ENCODE measurements at regions of chr11 and their contacts with region 1.

Region 1: DNA sequence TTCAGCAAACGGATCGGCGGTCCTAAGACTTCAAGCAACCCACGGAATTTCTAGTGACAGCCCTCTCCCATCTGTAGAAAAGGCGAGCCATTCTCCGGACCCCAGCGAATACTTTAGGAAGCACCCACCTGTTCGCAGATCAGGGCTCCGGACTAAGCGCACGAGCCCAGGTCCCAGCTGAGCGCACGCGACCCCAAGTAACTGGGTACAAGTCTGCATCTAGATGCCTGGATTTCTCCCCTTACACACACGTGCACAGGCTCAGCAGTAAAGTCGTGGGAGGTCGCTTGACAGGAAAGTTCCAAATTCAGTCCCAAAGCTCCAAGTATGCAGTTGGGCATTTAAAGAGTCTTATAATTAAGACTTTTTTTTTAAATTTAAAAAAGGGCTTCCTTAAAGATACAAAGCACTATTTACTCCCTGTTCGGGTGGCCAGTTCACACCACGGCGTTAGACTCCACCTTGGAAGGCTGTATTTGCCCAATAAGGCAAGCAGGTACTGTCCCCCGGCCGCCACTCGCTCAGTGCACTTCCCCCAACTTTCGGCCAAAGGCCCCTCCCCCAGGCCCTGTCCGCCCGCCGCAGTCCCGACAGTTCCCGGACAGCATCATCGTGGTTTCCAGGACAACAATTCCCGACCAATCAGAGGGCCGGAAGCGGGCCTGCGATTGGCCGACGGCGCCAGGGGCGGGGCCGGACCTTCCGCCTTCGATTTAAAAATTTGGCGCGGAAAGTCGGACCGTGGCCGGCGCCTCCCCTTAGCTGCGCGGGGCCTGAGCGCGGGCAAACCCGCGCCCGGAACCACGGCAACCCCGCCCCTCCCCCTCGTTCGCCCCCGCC is at the start of gene E2F8:
- DNase-seq: peak; percentile 99
- H3K4me3 ChIP-seq: peak within 1 kb of the TSS; percentile 96
- H3K4me3 Mint-ChIP-seq: peak within 1 kb of the TSS; percentile 97
- H3K27ac Mint-ChIP-seq: peak within 1 kb of the TSS; percentile 90
- H3K4me1 ChIP-seq: peaks cover 48% of the 10 kb centered on the region
- H3K4me1 Mint-ChIP-seq: peaks cover 21% of the 10 kb centered on the region
- H3K27me3 ChIP-seq: no peaks in the 10 kb centered on the region
- H3K27me3 Mint-ChIP-seq: no peaks in the 10 kb centered on the region
- CTCF ChIP-seq: no peak
- total RNA-seq, gene E2F8: 38.1 and 38.4 TPM in 2 replicates

Region 2: DNA sequence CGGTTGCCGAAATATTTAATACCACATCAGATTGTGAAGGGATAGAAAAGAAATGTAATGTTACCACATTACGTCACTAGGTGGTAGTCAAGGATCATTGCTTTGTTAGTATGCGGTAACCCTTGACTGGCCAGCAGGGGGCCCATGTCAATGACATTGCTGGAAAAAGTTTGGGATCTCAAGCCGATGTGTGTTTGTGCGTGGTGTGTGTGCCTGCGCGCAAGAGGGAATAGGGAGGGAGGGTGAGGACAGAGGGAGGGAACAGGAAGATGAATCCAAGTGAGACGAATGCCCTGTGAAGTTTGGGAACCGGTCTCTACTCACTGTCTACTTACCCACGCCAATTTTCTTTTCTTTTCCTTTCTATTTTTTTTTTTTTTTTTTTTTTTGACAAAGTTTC is 169.4 kb before region 1 on chr11:
- CTCF ChIA-PET with region 1: interaction called, 3 read pairs
- POLR2A ChIA-PET with region 1: no interaction called
- intact Hi-C with region 1: loop called (anchors 5 kb)
- DNase-seq: peak; percentile 83 to 84
- H3K4me3 ChIP-seq: no peak overlapping the region
- H3K4me3 Mint-ChIP-seq: peak overlapping the region; percentile 29
- H3K27ac Mint-ChIP-seq: no peak overlapping the region
- H3K4me1 ChIP-seq: no peaks in the 10 kb centered on the region; the same call in 1 of the 2 replicates
- H3K4me1 Mint-ChIP-seq: peaks cover 15% of the 10 kb centered on the region
- H3K27me3 ChIP-seq: no peaks in the 10 kb centered on the region
- H3K27me3 Mint-ChIP-seq: peaks cover 8% of the 10 kb centered on the region
- CTCF ChIP-seq: peak; percentile 99

Region 3: GRCh38 chr11:19176629-19177186 is 63.9 kb before region 1 on chr11:
- CTCF ChIA-PET with region 1: no interaction called
- POLR2A ChIA-PET with region 1: no interaction called
- intact Hi-C with region 1: loop called (anchors 5 kb)
- DNase-seq: peak; percentile 44
- H3K4me3 ChIP-seq: no peak overlapping the region
- H3K4me3 Mint-ChIP-seq: no peak overlapping the region
- H3K27ac Mint-ChIP-seq: no peak overlapping the region
- H3K4me1 ChIP-seq: peaks cover 17% of the 10 kb centered on the region
- H3K4me1 Mint-ChIP-seq: peaks cover 20% of the 10 kb centered on the region
- H3K27me3 ChIP-seq: no peaks in the 10 kb centered on the region
- H3K27me3 Mint-ChIP-seq: no peaks in the 10 kb centered on the region
- CTCF ChIP-seq: no peak

Region 4: DNA sequence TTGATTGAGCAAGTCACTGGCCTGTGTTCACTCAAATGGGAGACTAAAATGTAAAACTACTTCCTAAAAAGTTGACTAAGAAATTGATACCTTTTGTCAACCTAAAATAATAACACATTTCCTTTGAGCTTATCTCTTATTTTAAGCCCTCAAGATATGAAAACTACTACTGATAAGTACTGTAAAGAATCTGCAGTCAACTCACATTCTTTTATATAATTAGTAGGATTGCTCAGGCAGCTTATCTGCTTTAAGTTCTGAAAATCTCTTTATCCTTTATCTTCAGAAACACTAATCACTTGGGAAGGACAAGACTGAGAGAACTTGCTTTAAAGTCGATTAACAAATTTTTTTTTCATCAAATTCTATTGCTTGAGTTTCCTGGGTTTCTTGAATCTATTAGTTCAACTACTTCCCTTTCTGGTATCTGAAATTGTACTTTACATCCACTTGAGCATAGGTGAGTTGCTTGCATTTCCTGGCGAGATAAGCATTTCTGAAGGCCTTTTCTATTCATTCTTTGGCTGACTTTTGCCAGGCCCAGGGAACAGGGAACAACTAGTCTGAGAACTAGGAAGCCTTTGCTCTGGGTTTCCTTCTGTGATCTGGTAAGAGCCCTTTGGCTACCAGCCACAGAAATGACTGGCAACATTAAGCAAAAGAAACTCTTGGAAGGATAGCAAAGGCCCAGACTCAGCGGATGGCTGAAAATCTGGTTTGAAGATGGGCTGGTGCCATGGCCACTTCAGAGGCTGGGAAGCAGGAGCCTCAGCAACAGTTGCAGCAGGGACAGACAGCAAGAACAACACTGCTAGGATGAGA is 19.5 kb before region 1 on chr11:
- CTCF ChIA-PET with region 1: interaction called, 7 read pairs
- POLR2A ChIA-PET with region 1: interaction called, 4 read pairs
- intact Hi-C with region 1: loop called (anchors 1 kb)
- DNase-seq: peak in 1 of 2 experiments; percentile 38
- H3K4me3 ChIP-seq: no peak overlapping the region
- H3K4me3 Mint-ChIP-seq: peak overlapping the region; percentile 1
- H3K27ac Mint-ChIP-seq: peak overlapping the region; percentile 52
- H3K4me1 ChIP-seq: peaks cover 43% of the 10 kb centered on the region
- H3K4me1 Mint-ChIP-seq: peaks cover 36% of the 10 kb centered on the region
- H3K27me3 ChIP-seq: no peaks in the 10 kb centered on the region
- H3K27me3 Mint-ChIP-seq: no peaks in the 10 kb centered on the region
- CTCF ChIP-seq: no peak

Region 5: GRCh38 chr11:19253153-19253745 is 12.6 kb after region 1 on chr11:
- CTCF ChIA-PET with region 1: no interaction called
- POLR2A ChIA-PET with region 1: no interaction called
- intact Hi-C with region 1: no loop called
- DNase-seq: peak; percentile 24 to 42
- H3K4me3 ChIP-seq: no peak overlapping the region
- H3K4me3 Mint-ChIP-seq: no peak overlapping the region
- H3K27ac Mint-ChIP-seq: no peak overlapping the region
- H3K4me1 ChIP-seq: no peaks in the 10 kb centered on the region; the same call in 1 of the 2 replicates
- H3K4me1 Mint-ChIP-seq: peaks cover 7% of the 10 kb centered on the region
- H3K27me3 ChIP-seq: no peaks in the 10 kb centered on the region
- H3K27me3 Mint-ChIP-seq: no peaks in the 10 kb centered on the region
- CTCF ChIP-seq: no peak

Region 6: DNA sequence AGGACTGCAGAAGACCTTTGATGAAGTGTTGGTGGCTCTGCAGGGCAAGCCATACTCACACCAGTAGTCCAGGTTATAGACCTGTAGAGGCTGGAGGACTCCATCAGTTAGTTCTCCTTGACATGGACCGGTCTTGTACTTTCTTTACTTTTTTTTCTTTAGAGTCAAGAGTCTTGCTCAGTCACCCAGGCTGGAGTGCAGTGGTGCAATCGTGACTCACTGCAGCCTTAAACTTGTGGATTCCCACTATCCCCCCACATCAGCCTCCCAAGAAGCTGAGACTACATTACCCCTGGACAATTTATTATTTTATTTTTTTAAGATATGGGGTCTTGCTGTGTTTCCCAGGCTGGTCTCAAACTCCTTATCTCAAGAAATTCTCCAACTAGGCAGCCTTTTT is 49.7 kb after region 1 on chr11:
- CTCF ChIA-PET with region 1: no interaction called
- POLR2A ChIA-PET with region 1: no interaction called
- intact Hi-C with region 1: no loop called
- DNase-seq: no peak
- H3K4me3 ChIP-seq: no peak overlapping the region
- H3K4me3 Mint-ChIP-seq: no peak overlapping the region
- H3K27ac Mint-ChIP-seq: no peak overlapping the region
- H3K4me1 ChIP-seq: no peaks in the 10 kb centered on the region
- H3K4me1 Mint-ChIP-seq: no peaks in the 10 kb centered on the region
- H3K27me3 ChIP-seq: no peaks in the 10 kb centered on the region
- H3K27me3 Mint-ChIP-seq: peaks cover 2% of the 10 kb centered on the region
- CTCF ChIP-seq: no peak

Region 7: GRCh38 chr11:19370100-19370861 is 129.6 kb after region 1 on chr11:
- CTCF ChIA-PET with region 1: no interaction called
- POLR2A ChIA-PET with region 1: interaction called, 11 read pairs
- intact Hi-C with region 1: no loop called
- DNase-seq: peak; percentile 48 to 64
- H3K4me3 ChIP-seq: no peak overlapping the region
- H3K4me3 Mint-ChIP-seq: peak overlapping the region; percentile 15
- H3K27ac Mint-ChIP-seq: peak overlapping the region; percentile 25
- H3K4me1 ChIP-seq: peaks cover 19% of the 10 kb centered on the region
- H3K4me1 Mint-ChIP-seq: peaks cover 12% of the 10 kb centered on the region
- H3K27me3 ChIP-seq: no peaks in the 10 kb centered on the region
- H3K27me3 Mint-ChIP-seq: no peaks in the 10 kb centered on the region
- CTCF ChIP-seq: no peak

Region 8: GRCh38 chr11:19614370-19614940 is 373.8 kb after region 1 on chr11:
- CTCF ChIA-PET with region 1: no interaction called
- POLR2A ChIA-PET with region 1: no interaction called
- intact Hi-C with region 1: no loop called
- DNase-seq: no peak
- H3K4me3 ChIP-seq: no peak overlapping the region
- H3K4me3 Mint-ChIP-seq: no peak overlapping the region
- H3K27ac Mint-ChIP-seq: no peak overlapping the region
- H3K4me1 ChIP-seq: no peaks in the 10 kb centered on the region
- H3K4me1 Mint-ChIP-seq: no peaks in the 10 kb centered on the region
- H3K27me3 ChIP-seq: no peaks in the 10 kb centered on the region
- H3K27me3 Mint-ChIP-seq: peaks cover 4% of the 10 kb centered on the region
- CTCF ChIP-seq: no peak

Region 9: GRCh38 chr11:19723572-19724342 is 483.1 kb after region 1 on chr11:
- CTCF ChIA-PET with region 1: no interaction called
- POLR2A ChIA-PET with region 1: no interaction called
- intact Hi-C with region 1: no loop called
- DNase-seq: no peak
- H3K4me3 ChIP-seq: no peak overlapping the region
- H3K4me3 Mint-ChIP-seq: no peak overlapping the region
- H3K27ac Mint-ChIP-seq: no peak overlapping the region
- H3K4me1 ChIP-seq: peaks cover 9% of the 10 kb centered on the region; the same call in 1 of the 2 replicates
- H3K4me1 Mint-ChIP-seq: peaks cover 12% of the 10 kb centered on the region
- H3K27me3 ChIP-seq: no peaks in the 10 kb centered on the region
- H3K27me3 Mint-ChIP-seq: no peaks in the 10 kb centered on the region
- CTCF ChIP-seq: no peak